ENCODE measurements at regions of chr7 and their contacts with region 1.

Region 1: DNA sequence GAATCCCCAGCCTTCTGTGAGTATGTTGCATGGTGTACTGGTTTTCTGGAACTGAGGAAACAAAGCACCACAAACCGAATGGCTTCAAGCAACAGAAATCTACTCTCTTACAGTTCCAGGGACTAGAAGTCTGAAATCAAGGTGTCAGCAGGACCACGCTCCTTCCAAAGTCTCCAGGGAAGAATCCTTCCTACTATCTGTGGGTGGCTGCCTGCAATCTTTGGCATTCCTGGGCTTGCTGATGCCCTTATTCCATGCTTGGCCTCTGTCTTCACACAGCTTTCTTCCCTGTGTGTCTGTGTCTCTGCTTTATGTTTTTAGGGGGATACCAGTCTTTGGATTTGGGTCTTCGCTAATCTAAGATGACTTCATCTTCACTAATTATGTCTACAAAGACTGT is 81.3 kb downstream of the LMBR1 start:
- DNase-seq: no peak
- H3K4me3 Mint-ChIP-seq: no peak overlapping the region
- H3K27ac Mint-ChIP-seq: no peak overlapping the region
- H3K4me1 Mint-ChIP-seq: no peaks in the 10 kb centered on the region
- H3K27me3 Mint-ChIP-seq: no peaks in the 10 kb centered on the region

Region 2: GRCh38 chr7:156668181-156668624 is 143.5 kb before region 1 on chr7:
- intact Hi-C with region 1: no loop called
- DNase-seq: no peak
- H3K4me3 Mint-ChIP-seq: no peak overlapping the region
- H3K27ac Mint-ChIP-seq: no peak overlapping the region
- H3K4me1 Mint-ChIP-seq: no peaks in the 10 kb centered on the region
- H3K27me3 Mint-ChIP-seq: no peaks in the 10 kb centered on the region

Region 3: GRCh38 chr7:156793334-156793733 is 18.4 kb before region 1 on chr7:
- intact Hi-C with region 1: loop called (anchors 1 kb)
- DNase-seq: no peak
- H3K4me3 Mint-ChIP-seq: no peak overlapping the region
- H3K27ac Mint-ChIP-seq: no peak overlapping the region
- H3K4me1 Mint-ChIP-seq: no peaks in the 10 kb centered on the region
- H3K27me3 Mint-ChIP-seq: no peaks in the 10 kb centered on the region

Region 4: GRCh38 chr7:156865493-156865892 is 53.8 kb after region 1 on chr7:
- intact Hi-C with region 1: no loop called
- DNase-seq: no peak
- H3K4me3 Mint-ChIP-seq: no peak overlapping the region
- H3K27ac Mint-ChIP-seq: no peak overlapping the region
- H3K4me1 Mint-ChIP-seq: no peaks in the 10 kb centered on the region
- H3K27me3 Mint-ChIP-seq: no peaks in the 10 kb centered on the region